ENCODE measurements at regions of chr2 and their contacts with region 1.

Region 1: DNA sequence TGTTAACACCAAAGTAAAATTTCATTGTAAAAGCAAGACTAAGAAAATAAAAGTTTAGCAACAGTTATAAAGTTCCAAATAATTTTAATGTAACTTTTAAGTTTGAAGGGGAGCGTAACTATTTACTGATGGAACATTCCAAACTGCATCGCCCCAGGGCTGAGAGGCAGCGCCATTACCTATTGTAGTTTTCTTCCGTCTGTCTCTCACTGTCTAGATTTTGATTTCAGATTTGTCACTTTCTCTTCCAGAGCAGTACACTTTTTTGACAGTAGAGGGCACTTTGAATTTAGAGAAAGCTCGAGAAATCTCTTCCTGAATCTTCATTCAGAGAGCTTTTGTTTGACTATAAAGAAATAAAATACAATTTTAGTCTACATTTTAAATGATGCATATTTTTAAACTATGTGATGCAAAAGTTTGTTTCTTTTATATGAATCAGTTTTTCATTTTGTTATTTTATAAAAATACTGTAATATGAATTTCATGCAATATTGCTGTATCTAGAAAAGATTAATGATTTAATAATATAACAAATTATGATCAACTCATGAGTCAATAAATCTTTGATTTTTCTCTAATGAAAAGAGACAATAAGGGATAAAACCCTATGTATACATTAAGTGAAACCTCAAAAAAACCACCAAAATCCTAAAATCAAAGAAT is 389.8 kb downstream of the FIGN start:
- DNase-seq: peak; percentile 80
- H3K4me3 ChIP-seq: no peak overlapping the region
- H3K27ac ChIP-seq: no peak overlapping the region
- H3K4me1 ChIP-seq: peaks cover 53% of the 10 kb centered on the region
- H3K27me3 ChIP-seq: no peaks in the 10 kb centered on the region
- CTCF ChIP-seq: peak; percentile 52 to 57
- POLR2A ChIP-seq: no peak

Region 2: GRCh38 chr2:163155279-163155883 is 190.7 kb before region 1 on chr2:
- CTCF ChIA-PET with region 1: interaction called, 7 read pairs
- POLR2A ChIA-PET with region 1: no interaction called
- dilution Hi-C with region 1: no loop called
- intact Hi-C with region 1: loop called (anchors 1 kb)
- DNase-seq: peak; percentile 59
- H3K4me3 ChIP-seq: no peak overlapping the region
- H3K27ac ChIP-seq: no peak overlapping the region
- H3K4me1 ChIP-seq: peaks cover 25% of the 10 kb centered on the region
- H3K27me3 ChIP-seq: no peaks in the 10 kb centered on the region
- CTCF ChIP-seq: peak; percentile 32 to 34
- POLR2A ChIP-seq: no peak

Region 3: GRCh38 chr2:163191372-163191771 is 154.7 kb before region 1 on chr2:
- CTCF ChIA-PET with region 1: interaction called, 12 read pairs
- POLR2A ChIA-PET with region 1: no interaction called
- dilution Hi-C with region 1: no loop called
- intact Hi-C with region 1: loop called (anchors 1 kb)
- DNase-seq: peak; percentile 64
- H3K4me3 ChIP-seq: no peak overlapping the region
- H3K27ac ChIP-seq: no peak overlapping the region
- H3K4me1 ChIP-seq: peaks cover 19% of the 10 kb centered on the region
- H3K27me3 ChIP-seq: no peaks in the 10 kb centered on the region
- CTCF ChIP-seq: peak; percentile 45 to 47
- POLR2A ChIP-seq: no peak

Region 4: GRCh38 chr2:163456953-163457743 is 111.1 kb after region 1 on chr2:
- CTCF ChIA-PET with region 1: no interaction called
- POLR2A ChIA-PET with region 1: no interaction called
- dilution Hi-C with region 1: no loop called
- intact Hi-C with region 1: no loop called
- DNase-seq: no peak
- H3K4me3 ChIP-seq: no peak overlapping the region
- H3K27ac ChIP-seq: no peak overlapping the region
- H3K4me1 ChIP-seq: no peaks in the 10 kb centered on the region
- H3K27me3 ChIP-seq: peaks cover 0 to 5% of the 10 kb centered on the region in 2 experiments
- CTCF ChIP-seq: no peak
- POLR2A ChIP-seq: no peak

Region 5: GRCh38 chr2:163485496-163485895 is 139.5 kb after region 1 on chr2:
- CTCF ChIA-PET with region 1: no interaction called
- POLR2A ChIA-PET with region 1: no interaction called
- dilution Hi-C with region 1: no loop called
- intact Hi-C with region 1: no loop called
- DNase-seq: no peak
- H3K4me3 ChIP-seq: no peak overlapping the region
- H3K27ac ChIP-seq: no peak overlapping the region
- H3K4me1 ChIP-seq: no peaks in the 10 kb centered on the region
- H3K27me3 ChIP-seq: peaks cover 0 to 5% of the 10 kb centered on the region in 2 experiments
- CTCF ChIP-seq: no peak
- POLR2A ChIP-seq: no peak

Region 6: GRCh38 chr2:163652751-163653150 is 306.7 kb after region 1 on chr2:
- CTCF ChIA-PET with region 1: interaction called, 8 read pairs
- POLR2A ChIA-PET with region 1: no interaction called
- dilution Hi-C with region 1: no loop called
- intact Hi-C with region 1: loop called (anchors 5 kb)
- DNase-seq: peak; percentile 70
- H3K4me3 ChIP-seq: no peak overlapping the region
- H3K27ac ChIP-seq: peak overlapping the region; percentile 50
- H3K4me1 ChIP-seq: peaks cover 24% of the 10 kb centered on the region
- H3K27me3 ChIP-seq: no peaks in the 10 kb centered on the region
- CTCF ChIP-seq: no peak
- POLR2A ChIP-seq: no peak

Region 7: GRCh38 chr2:163778044-163778781 is 432.2 kb after region 1 on chr2:
- CTCF ChIA-PET with region 1: interaction called, 5 read pairs
- POLR2A ChIA-PET with region 1: no interaction called
- dilution Hi-C with region 1: no loop called
- intact Hi-C with region 1: loop called (anchors 2 kb)
- DNase-seq: peak; percentile 68
- H3K4me3 ChIP-seq: no peak overlapping the region
- H3K27ac ChIP-seq: peak overlapping the region; percentile 61
- H3K4me1 ChIP-seq: peaks cover 29% of the 10 kb centered on the region
- H3K27me3 ChIP-seq: no peaks in the 10 kb centered on the region
- CTCF ChIP-seq: no peak
- POLR2A ChIP-seq: no peak

Region 8: GRCh38 chr2:164430166-164430783 is 1084.2 kb after region 1 on chr2:
- CTCF ChIA-PET with region 1: interaction called, 11 read pairs
- POLR2A ChIA-PET with region 1: no interaction called
- dilution Hi-C with region 1: no loop called
- intact Hi-C with region 1: loop called (anchors 1 kb)
- DNase-seq: peak; percentile 60
- H3K4me3 ChIP-seq: no peak overlapping the region
- H3K27ac ChIP-seq: no peak overlapping the region
- H3K4me1 ChIP-seq: no peaks in the 10 kb centered on the region
- H3K27me3 ChIP-seq: no peaks in the 10 kb centered on the region
- CTCF ChIP-seq: peak; percentile 48 to 57
- POLR2A ChIP-seq: no peak